ENCODE measurements at regions of chr17 and their contacts with region 1.

Region 1: GRCh38 chr17:143782-144281 is 6.5 kb downstream of the SCGB1C2 start:
- DNase-seq: peak; percentile 29
- ATAC-seq: peak; percentile 93
- H3K4me3 ChIP-seq: no peak overlapping the region
- H3K27ac ChIP-seq: no peak overlapping the region
- H3K4me1 ChIP-seq: peaks cover 2 to 5% of the 10 kb centered on the region in 2 experiments; a peak in 1 of 4 replicates
- H3K27me3 ChIP-seq: no peaks in the 10 kb centered on the region
- CTCF ChIP-seq: peak; percentile 67 to 79 (median 72)
- POLR2A ChIP-seq: no peak
- RAD21 ChIP-seq: peak; percentile 84

Region 2: DNA sequence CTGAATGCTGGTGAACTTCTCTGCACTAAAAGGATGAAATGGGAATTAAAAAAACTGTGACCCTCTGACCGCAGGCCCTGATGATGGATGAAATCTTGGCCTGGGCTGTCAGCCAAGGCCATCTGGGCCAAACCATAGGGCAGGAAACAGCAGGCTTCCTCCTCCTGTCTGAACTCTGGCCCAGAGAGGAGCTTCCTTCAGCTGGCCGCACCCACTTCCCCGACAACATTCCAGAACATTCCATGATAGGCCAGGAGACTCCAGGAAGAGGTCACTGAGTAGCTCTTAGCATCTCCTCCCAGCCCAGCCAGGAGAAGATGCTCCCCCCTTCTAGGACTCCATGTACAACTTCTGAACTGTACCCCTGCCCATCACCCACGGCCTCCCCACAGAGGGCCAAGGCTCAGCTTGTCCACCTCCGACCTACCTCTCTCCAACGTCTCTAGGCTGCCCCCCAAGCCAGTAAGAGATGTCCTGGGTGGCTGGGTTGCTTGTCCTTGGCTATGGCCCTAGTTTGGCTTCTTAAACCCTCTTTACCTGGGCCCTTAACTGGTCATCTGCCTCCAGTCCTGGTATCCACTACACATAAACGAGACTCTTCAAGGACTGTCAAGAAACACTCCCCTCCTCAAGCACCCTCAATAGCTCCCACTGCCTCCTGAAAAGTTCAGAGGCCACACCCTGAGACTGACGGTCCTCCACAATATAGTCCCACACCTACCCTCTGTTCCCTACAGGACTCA is 207.0 kb after region 1 on chr17:
- CTCF ChIA-PET with region 1: no interaction called
- POLR2A ChIA-PET with region 1: no interaction called
- RAD21 ChIA-PET with region 1: no interaction called
- intact Hi-C with region 1: no loop called
- DNase-seq: no peak
- ATAC-seq: peak; percentile 33; the same call in 1 of the 2 replicates
- H3K4me3 ChIP-seq: no peak overlapping the region
- H3K27ac ChIP-seq: no peak overlapping the region
- H3K4me1 ChIP-seq: peaks cover 13 to 41% of the 10 kb centered on the region in 2 experiments
- H3K27me3 ChIP-seq: no peaks in the 10 kb centered on the region
- CTCF ChIP-seq: no peak
- POLR2A ChIP-seq: no peak
- RAD21 ChIP-seq: no peak

Region 3: GRCh38 chr17:385926-386876 is 242.4 kb after region 1 on chr17:
- CTCF ChIA-PET with region 1: no interaction called
- POLR2A ChIA-PET with region 1: no interaction called
- RAD21 ChIA-PET with region 1: no interaction called
- intact Hi-C with region 1: loop called (anchors 2 kb)
- DNase-seq: peak; percentile 6
- ATAC-seq: peak; percentile 91
- H3K4me3 ChIP-seq: peak overlapping the region; percentile 48 to 50
- H3K27ac ChIP-seq: peak overlapping the region; percentile 50; the same call in 1 of the 2 replicates
- H3K4me1 ChIP-seq: peaks cover 8 to 15% of the 10 kb centered on the region in 2 experiments
- H3K27me3 ChIP-seq: no peaks in the 10 kb centered on the region
- CTCF ChIP-seq: peak; percentile 31 to 61 (median 52)
- POLR2A ChIP-seq: no peak
- RAD21 ChIP-seq: peak; percentile 76

Region 4: GRCh38 chr17:996554-997344 is 852.9 kb after region 1 on chr17 and contains the start of gene TIMM22:
- CTCF ChIA-PET with region 1: no interaction called
- POLR2A ChIA-PET with region 1: no interaction called
- RAD21 ChIA-PET with region 1: no interaction called
- intact Hi-C with region 1: loop called (anchors 5 kb)
- DNase-seq: peak; percentile 96
- ATAC-seq: peak; percentile 95
- H3K4me3 ChIP-seq: peak within 1 kb of the TSS; percentile 99 to 100
- H3K27ac ChIP-seq: peak within 1 kb of the TSS; percentile 58
- H3K4me1 ChIP-seq: peaks cover 8 to 19% of the 10 kb centered on the region in 2 experiments; a peak in 3 of 4 replicates
- H3K27me3 ChIP-seq: no peaks in the 10 kb centered on the region
- CTCF ChIP-seq: peak; percentile 88 to 93 (median 91); a peak in 5 of 6 replicates
- POLR2A ChIP-seq: peak; percentile 80
- RAD21 ChIP-seq: peak; percentile 98
- total RNA-seq, gene TIMM22: 14.0 TPM

Measured in HCT116 (cell line).